A673 (cell line): ENCODE measurements at regions of chr17 and their contacts with region 1.

Region 1: GRCh38 chr17:2521257-2521656 is 9.6 kb upstream of the METTL16 start:
- DNase-seq: no peak
- H3K4me3 ChIP-seq: no peak overlapping the region
- H3K27ac ChIP-seq: no peak overlapping the region
- H3K4me1 ChIP-seq: no peaks in the 10 kb centered on the region
- H3K27me3 ChIP-seq: no peaks in the 10 kb centered on the region
- CTCF ChIP-seq: no peak

Region 2: GRCh38 chr17:2449486-2449885 is 71.8 kb before region 1 on chr17:
- CTCF ChIA-PET with region 1: no interaction called
- POLR2A ChIA-PET with region 1: no interaction called
- intact Hi-C with region 1: no loop called
- DNase-seq: peak; percentile 28
- H3K4me3 ChIP-seq: no peak overlapping the region
- H3K27ac ChIP-seq: no peak overlapping the region
- H3K4me1 ChIP-seq: peaks cover 22% of the 10 kb centered on the region
- H3K27me3 ChIP-seq: no peaks in the 10 kb centered on the region
- CTCF ChIP-seq: no peak

Region 3: GRCh38 chr17:2571523-2572303 is 50.5 kb after region 1 on chr17:
- CTCF ChIA-PET with region 1: no interaction called
- POLR2A ChIA-PET with region 1: interaction called, 19 read pairs
- intact Hi-C with region 1: no loop called
- DNase-seq: no peak
- H3K4me3 ChIP-seq: no peak overlapping the region
- H3K27ac ChIP-seq: no peak overlapping the region
- H3K4me1 ChIP-seq: no peaks in the 10 kb centered on the region
- H3K27me3 ChIP-seq: no peaks in the 10 kb centered on the region
- CTCF ChIP-seq: no peak